ENCODE measurements at regions of chr1 and their contacts with region 1.

Region 1: DNA sequence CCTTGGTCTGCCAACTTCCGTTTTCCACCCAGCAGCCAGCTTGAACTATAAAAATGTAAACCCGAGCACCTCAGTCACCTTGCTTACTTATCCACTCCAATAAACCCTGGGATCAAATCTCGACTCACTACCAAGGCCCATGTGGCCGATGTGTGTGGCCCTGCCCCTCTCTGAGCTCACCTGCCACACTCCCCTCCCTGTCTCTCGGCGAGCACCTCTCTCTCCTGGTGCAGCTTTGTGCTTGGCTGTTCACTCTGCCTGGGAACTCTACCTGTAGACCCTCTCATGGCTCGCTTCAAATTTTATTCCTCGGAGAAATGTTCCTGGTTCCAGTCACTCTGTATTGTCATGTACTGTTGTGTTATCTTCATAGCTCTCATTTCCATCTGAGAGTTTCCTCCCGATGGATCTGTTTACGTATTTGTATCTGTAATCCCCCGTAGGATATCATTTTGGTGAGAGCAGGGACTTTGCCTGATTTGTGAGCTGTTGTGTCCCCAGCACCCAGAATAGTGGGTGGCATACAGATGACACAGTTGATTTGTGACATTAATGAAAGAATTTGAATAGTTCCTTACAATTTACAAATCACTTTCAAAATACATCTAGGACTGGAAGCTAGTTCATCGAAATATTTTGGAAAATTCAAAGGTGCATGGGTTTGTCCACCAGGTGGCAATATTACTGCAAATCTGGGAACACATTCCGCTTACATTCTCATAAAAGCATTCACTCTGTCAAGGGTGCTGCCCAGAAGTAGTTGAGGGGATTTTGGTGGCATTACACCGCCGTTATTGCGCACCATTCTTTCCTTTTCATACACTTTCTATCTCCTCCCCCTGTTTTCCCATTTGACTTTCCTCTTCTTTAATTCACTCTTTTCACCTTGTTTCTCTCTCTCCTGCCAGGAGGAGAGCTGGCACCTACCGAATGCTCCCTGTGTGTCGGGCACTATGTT is 95.3 kb downstream of the ABCA4 start:
- DNase-seq: peak in 3 of 5 donors; percentile 55 to 83 (median 75)
- H3K4me3 ChIP-seq: peak overlapping the region in 2 of 3 donors; percentile 3 to 36
- H3K27ac ChIP-seq: no peak overlapping the region
- H3K4me1 ChIP-seq: no peaks in the 10 kb centered on the region
- H3K27me3 ChIP-seq: no peaks in the 10 kb centered on the region
- CTCF ChIP-seq: peak; percentile 77

Region 2: GRCh38 chr1:93844262-93845045 is 181.2 kb before region 1 on chr1:
- intact Hi-C with region 1: no loop called
- DNase-seq: peak in 4 of 5 donors; percentile 52 to 91 (median 76)
- H3K4me3 ChIP-seq: no peak overlapping the region
- H3K27ac ChIP-seq: no peak overlapping the region
- H3K4me1 ChIP-seq: peaks cover 2 to 7% (median 7%) of the 10 kb centered on the region in 3 donors
- H3K27me3 ChIP-seq: no peaks in the 10 kb centered on the region
- CTCF ChIP-seq: peak; percentile 79

Region 3: DNA sequence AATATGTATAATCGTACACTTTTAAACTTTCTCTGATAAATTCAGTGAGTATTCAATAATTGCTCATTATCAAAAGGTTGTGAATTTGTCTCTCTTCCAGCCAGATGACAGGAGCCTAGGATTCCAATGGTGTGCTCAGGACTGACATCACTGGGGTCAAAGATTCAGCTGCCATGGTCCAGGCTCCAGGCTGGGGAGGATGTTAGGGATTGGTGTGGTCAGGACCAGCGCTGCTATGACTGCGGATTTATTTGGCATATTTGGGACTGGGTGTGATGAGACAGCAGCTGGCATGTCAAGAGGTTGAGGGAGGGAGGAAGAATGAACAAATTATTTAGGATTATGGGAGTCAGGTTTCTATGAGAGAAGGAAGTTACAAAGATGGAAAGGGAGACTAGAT is 143.5 kb after region 1 on chr1:
- intact Hi-C with region 1: no loop called
- DNase-seq: no peak
- H3K4me3 ChIP-seq: no peak overlapping the region
- H3K27ac ChIP-seq: no peak overlapping the region
- H3K4me1 ChIP-seq: no peaks in the 10 kb centered on the region
- H3K27me3 ChIP-seq: no peaks in the 10 kb centered on the region
- CTCF ChIP-seq: no peak

Region 4: DNA sequence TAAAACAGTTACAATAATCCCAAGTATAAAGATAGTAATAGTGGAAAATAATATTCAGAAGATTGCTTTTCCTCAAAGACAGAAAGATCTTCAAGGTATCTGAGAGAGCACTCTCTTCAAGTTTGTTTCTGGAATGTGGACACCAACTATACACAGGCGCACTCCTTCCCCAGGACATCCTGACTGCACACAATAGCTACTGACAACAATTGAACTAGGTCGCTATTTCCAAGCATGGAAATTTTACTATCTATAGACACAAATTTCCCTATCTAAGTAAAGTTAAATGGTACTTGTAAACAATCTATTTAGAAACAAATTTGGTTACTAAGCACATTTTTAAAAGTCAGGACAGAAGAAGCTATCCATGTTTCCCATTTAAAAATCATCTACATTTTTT is 192.7 kb after region 1 on chr1:
- intact Hi-C with region 1: no loop called
- DNase-seq: peak in 1 of 5 donors; percentile 20
- H3K4me3 ChIP-seq: no peak overlapping the region
- H3K27ac ChIP-seq: no peak overlapping the region
- H3K4me1 ChIP-seq: peaks cover 0 to 7% (median 3%) of the 10 kb centered on the region in 3 donors
- H3K27me3 ChIP-seq: no peaks in the 10 kb centered on the region
- CTCF ChIP-seq: no peak

Region 5: DNA sequence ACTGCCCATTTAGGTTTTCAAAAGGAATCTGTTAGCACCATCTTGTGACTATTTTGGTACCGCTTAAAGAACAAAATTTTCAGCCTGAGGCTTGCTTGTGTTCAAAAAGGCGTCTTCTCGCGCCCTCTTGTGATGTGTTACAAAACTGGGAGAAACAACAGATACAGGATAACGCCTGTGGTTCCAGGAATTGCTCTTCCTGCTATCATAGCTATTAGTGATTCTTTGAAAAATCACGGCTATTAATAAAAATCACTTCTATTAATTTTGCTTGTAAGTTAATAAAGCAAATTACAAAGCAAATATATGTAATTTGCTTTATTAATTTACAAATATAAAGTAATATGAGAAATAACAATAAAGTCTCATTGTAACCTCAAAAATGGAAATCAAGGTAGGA is 310.3 kb after region 1 on chr1:
- intact Hi-C with region 1: loop called (anchors 10 kb)
- DNase-seq: peak in 4 of 5 donors; percentile 70 to 96 (median 84)
- H3K4me3 ChIP-seq: peak overlapping the region in 1 of 3 donors; percentile 24
- H3K27ac ChIP-seq: no peak overlapping the region
- H3K4me1 ChIP-seq: peaks cover 2 to 11% (median 6%) of the 10 kb centered on the region in 3 donors
- H3K27me3 ChIP-seq: no peaks in the 10 kb centered on the region
- CTCF ChIP-seq: peak; percentile 98